ENCODE measurements at regions of chr20 and their contacts with region 1.

Region 1: DNA sequence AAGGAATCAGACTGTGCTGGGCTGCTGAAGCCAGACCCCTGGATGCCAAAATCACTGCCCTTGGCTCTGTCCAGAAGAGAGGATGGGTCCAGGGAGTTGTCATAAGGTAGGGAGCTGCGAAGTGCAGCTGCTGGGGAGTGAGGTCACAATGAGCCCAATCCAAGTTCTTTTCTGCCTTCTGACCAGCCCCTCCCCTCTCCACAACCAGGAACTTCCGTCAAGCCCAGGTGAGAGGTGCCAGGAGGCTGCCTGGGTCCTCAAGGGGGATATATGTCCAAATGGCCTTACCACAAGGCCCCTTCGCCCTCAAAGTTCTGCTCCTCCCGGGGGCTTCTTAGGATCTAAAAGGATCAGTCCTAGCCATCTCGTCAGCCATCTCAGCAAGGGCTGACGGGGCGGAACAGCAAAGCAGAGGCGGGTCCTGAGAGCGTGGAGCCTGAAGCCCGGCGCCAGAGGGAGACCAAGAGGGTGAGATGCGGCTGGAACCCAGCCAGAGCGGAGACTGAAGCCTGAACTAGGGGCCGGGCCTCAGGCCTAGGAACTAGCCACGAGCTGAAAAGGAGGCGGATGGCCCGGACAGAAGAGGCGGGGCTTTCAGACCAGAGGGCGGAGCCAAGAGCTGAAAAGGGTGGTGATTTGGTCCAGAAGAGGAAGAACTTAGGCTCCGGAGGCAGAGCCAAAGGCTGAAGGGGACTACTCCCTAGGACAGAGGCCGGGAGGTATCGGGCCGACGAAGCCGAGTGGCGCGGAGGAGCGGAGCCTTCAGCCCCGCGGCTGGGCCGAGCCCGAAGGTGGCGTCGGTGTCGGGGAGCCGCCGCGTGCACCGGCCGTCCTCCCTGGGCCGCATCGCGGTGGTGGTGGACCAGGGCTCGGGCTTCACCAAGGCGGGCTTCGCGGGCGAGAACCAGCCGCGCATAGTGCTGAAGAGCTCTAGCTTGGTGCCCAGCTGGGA is at the start of gene ACTL10:
- DNase-seq: peak; percentile 100
- H3K4me3 ChIP-seq: peak within 1 kb of the TSS; percentile 78
- H3K4me3 Mint-ChIP-seq: peak within 1 kb of the TSS; percentile 84
- H3K27ac Mint-ChIP-seq: peak within 1 kb of the TSS; percentile 85
- H3K4me1 ChIP-seq: peaks cover 25% of the 10 kb centered on the region
- H3K4me1 Mint-ChIP-seq: peaks cover 24% of the 10 kb centered on the region
- H3K27me3 ChIP-seq: no peaks in the 10 kb centered on the region
- H3K27me3 Mint-ChIP-seq: no peaks in the 10 kb centered on the region
- CTCF ChIP-seq: peak; percentile 19 to 64
- total RNA-seq, gene ACTL10: 3.4 and 4.5 TPM in 2 replicates

Region 2: DNA sequence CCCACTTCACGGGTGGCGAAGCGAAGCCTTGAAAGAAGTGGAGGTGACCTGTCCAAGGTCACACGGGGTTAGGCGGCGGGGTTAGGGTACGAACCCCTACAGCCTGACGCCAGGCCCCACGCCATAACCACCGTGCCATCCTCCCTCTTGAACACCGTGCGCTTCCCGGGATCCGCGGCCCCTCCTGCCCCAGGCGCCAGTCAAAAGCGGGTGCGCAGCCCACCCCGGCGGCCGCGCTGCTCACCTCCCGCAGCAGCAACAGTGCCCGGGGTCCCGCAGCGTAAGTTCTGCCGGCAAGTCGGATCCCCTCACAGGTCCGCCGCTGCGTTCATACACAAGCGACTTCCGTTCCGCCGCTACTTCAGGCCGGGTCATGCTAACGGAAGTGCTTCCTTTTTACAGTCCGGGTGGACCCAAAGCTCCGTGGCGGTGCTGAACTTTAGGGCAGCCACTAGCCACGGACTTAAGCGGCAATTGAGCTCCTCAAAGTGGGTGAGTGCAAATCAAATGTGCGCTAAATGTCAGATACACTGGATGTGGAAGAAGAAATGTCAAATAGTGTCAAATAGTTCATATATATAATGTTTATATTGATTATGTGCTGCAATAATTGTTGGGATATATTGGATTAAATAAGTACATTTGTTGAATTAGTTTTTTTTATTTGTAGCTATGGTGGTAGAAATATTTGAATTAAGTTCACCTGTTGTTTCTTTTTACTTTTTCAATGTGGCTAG is 265.2 kb before region 1 on chr20 and contains the start of gene CDK5RAP1:
- CTCF ChIA-PET with region 1: interaction called, 9 read pairs
- POLR2A ChIA-PET with region 1: interaction called, 3 read pairs
- intact Hi-C with region 1: loop called (anchors 5 kb)
- DNase-seq: peak; percentile 95 to 96
- H3K4me3 ChIP-seq: peak within 1 kb of the TSS; percentile 88
- H3K4me3 Mint-ChIP-seq: peak within 1 kb of the TSS; percentile 91
- H3K27ac Mint-ChIP-seq: peak within 1 kb of the TSS; percentile 76
- H3K4me1 ChIP-seq: peaks cover 18% of the 10 kb centered on the region
- H3K4me1 Mint-ChIP-seq: peaks cover 8% of the 10 kb centered on the region
- H3K27me3 ChIP-seq: no peaks in the 10 kb centered on the region
- H3K27me3 Mint-ChIP-seq: no peaks in the 10 kb centered on the region
- CTCF ChIP-seq: no peak
- total RNA-seq, gene CDK5RAP1: 116 and 120 TPM in 2 replicates

Region 3: DNA sequence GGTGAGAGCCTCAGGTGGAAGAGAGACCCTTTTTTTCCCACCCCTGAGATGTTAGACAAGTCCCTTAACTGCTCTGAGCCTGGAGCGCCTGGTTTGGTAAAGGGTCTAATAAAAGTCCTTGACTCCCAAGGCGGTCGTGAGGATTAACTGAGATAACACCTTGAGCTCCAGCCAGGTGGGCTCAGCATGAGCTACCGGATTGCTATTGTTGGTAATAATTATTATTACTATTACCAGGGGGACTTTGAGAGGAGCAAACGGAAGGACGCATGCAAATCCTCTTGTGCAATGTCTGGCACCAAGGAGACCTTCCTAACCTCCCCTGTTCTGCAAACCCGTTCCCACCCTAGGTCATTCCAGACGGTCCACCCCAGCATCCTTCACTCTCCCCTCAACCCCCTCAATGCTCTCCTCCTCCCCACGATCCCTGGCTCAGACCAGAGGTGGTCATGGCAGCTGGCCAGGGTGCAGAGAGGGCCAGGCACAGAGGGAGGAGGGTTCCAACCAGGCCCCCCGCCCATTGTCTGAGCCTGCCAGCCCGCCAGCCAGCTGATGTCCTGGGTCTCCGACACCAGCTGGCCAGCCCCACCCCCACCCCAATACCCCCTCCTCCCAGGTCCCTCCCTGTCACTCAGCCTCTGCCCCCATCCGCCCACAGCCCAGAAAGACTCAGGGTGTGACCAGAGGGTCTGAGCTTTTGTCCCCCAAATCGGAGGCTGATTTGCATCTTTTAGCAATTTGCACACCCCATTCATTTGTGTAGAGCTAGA is 191.0 kb before region 1 on chr20:
- CTCF ChIA-PET with region 1: interaction called, 3 read pairs
- POLR2A ChIA-PET with region 1: interaction called, 17 read pairs
- intact Hi-C with region 1: no loop called
- DNase-seq: no peak
- H3K4me3 ChIP-seq: no peak overlapping the region
- H3K4me3 Mint-ChIP-seq: no peak overlapping the region
- H3K27ac Mint-ChIP-seq: no peak overlapping the region
- H3K4me1 ChIP-seq: peaks cover 9% of the 10 kb centered on the region
- H3K4me1 Mint-ChIP-seq: peaks cover 12% of the 10 kb centered on the region
- H3K27me3 ChIP-seq: no peaks in the 10 kb centered on the region
- H3K27me3 Mint-ChIP-seq: no peaks in the 10 kb centered on the region
- CTCF ChIP-seq: no peak

Region 4: GRCh38 chr20:33679758-33680485 is 13.4 kb after region 1 on chr20:
- CTCF ChIA-PET with region 1: interaction called, 29 read pairs
- POLR2A ChIA-PET with region 1: interaction called, 9 read pairs
- intact Hi-C with region 1: no loop called
- DNase-seq: no peak
- H3K4me3 ChIP-seq: no peak overlapping the region
- H3K4me3 Mint-ChIP-seq: no peak overlapping the region
- H3K27ac Mint-ChIP-seq: no peak overlapping the region
- H3K4me1 ChIP-seq: peaks cover 11% of the 10 kb centered on the region
- H3K4me1 Mint-ChIP-seq: peaks cover 29% of the 10 kb centered on the region
- H3K27me3 ChIP-seq: no peaks in the 10 kb centered on the region
- H3K27me3 Mint-ChIP-seq: no peaks in the 10 kb centered on the region
- CTCF ChIP-seq: no peak

Region 5: GRCh38 chr20:33731693-33732165 is 65.2 kb after region 1 on chr20 and contains the start of gene ZNF341:
- CTCF ChIA-PET with region 1: interaction called, 13 read pairs
- POLR2A ChIA-PET with region 1: interaction called, 10 read pairs
- intact Hi-C with region 1: loop called (anchors 1 kb)
- DNase-seq: peak in 1 of 2 experiments; percentile 97
- H3K4me3 ChIP-seq: peak within 1 kb of the TSS; percentile 72
- H3K4me3 Mint-ChIP-seq: peak within 1 kb of the TSS; percentile 94
- H3K27ac Mint-ChIP-seq: peak within 1 kb of the TSS; percentile 88
- H3K4me1 ChIP-seq: peaks cover 23% of the 10 kb centered on the region
- H3K4me1 Mint-ChIP-seq: peaks cover 27% of the 10 kb centered on the region
- H3K27me3 ChIP-seq: no peaks in the 10 kb centered on the region
- H3K27me3 Mint-ChIP-seq: no peaks in the 10 kb centered on the region
- CTCF ChIP-seq: peak; percentile 96 to 99
- total RNA-seq, gene ZNF341: 2.9 and 4.6 TPM in 2 replicates

Region 6: DNA sequence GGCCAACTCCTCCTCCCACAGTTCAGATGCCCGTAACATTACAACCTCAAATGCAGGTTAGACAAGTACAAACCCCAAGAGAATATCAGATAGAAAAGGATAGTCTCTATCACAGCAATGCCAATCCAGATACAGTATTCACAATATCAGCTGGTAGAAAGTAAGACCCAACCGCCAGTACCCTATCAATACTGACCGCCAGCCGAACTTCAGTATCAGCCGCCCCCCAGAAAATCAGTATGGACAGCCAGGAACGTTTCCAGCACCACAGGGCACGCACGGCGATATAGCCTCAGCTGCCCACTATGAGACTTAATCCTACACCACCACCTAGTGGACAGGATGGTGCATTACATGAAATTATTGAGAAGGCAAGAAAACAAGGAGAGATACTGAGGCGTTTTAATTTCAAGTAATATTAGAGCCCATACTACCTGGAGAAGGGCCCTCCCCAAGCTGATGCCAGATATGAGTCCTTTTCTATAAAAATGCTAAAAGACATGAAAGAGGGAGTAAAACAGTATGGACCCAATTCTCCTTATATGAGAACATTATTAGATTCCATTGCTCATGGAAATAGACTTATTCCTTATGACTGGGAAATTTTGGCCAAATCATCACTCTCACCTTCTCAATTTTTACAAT is 463.1 kb after region 1 on chr20:
- CTCF ChIA-PET with region 1: interaction called, 3 read pairs
- POLR2A ChIA-PET with region 1: no interaction called
- intact Hi-C with region 1: loop called (anchors 1 kb)
- DNase-seq: peak; percentile 83 to 91
- H3K4me3 ChIP-seq: peak overlapping the region; percentile 7; the same call in 1 of the 2 replicates
- H3K4me3 Mint-ChIP-seq: peak overlapping the region; percentile 41
- H3K27ac Mint-ChIP-seq: no peak overlapping the region
- H3K4me1 ChIP-seq: peaks cover 20% of the 10 kb centered on the region
- H3K4me1 Mint-ChIP-seq: peaks cover 26% of the 10 kb centered on the region
- H3K27me3 ChIP-seq: no peaks in the 10 kb centered on the region
- H3K27me3 Mint-ChIP-seq: peaks cover 3% of the 10 kb centered on the region
- CTCF ChIP-seq: peak; percentile 96 to 98